H1 (cell line): ENCODE measurements at regions of chr13 and their contacts with region 1.

Region 1: DNA sequence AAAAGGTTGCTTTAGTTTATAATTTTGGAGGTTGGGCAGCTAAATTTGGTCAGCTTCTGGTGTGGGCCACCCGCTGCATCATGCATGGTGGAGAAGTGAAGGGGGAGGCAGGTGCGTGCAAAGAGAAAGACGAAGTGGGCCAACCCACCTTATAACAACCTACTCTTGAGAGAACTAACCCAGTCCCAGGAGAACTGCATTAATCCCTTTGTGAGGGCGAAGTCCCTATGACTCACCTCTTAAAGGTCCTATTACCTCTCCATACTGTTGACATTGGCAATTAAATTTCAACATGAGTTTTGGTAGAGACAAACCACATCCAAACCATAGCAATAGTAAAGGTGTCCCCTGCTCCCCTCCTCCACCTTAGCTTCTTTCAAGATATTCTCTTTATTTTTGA is 7.7 kb upstream of the FGF9 start:
- DNase-seq: no peak
- H3K4me3 ChIP-seq: no peak overlapping the region
- H3K27ac ChIP-seq: no peak overlapping the region
- H3K4me1 ChIP-seq: peaks cover 0 to under 1% (median 0%) of the 10 kb centered on the region in 4 experiments; a peak in 2 of 7 replicates
- H3K27me3 ChIP-seq: peaks cover 7 to 15% (median 11%) of the 10 kb centered on the region in 4 experiments
- CTCF ChIP-seq: no peak
- EP300 ChIP-seq: no peak
- POLR2A ChIP-seq: no peak
- RAD21 ChIP-seq: no peak

Region 2: GRCh38 chr13:21638319-21639282 is 24.6 kb before region 1 on chr13:
- CTCF ChIA-PET with region 1: interaction called, 18 read pairs
- POLR2A ChIA-PET with region 1: no interaction called
- DNase-seq: peak in 1 of 2 experiments; percentile 53
- H3K4me3 ChIP-seq: no peak overlapping the region
- H3K27ac ChIP-seq: no peak overlapping the region
- H3K4me1 ChIP-seq: no peaks in the 10 kb centered on the region
- H3K27me3 ChIP-seq: no peaks in the 10 kb centered on the region
- CTCF ChIP-seq: peak in 2 of 3 experiments; percentile 28 to 55; a peak in 2 of 4 replicates
- EP300 ChIP-seq: no peak
- POLR2A ChIP-seq: no peak
- RAD21 ChIP-seq: peak; percentile 66 to 69